HEK293 (cell line): ENCODE measurements at regions of chr16 and their contacts with region 1.

Region 1: GRCh38 chr16:82684251-82684650 is 57.5 kb downstream of the CDH13 start:
- H3K4me3 ChIP-seq: no peak overlapping the region
- H3K27ac ChIP-seq: no peak overlapping the region
- H3K4me1 ChIP-seq: no peaks in the 10 kb centered on the region
- CTCF ChIP-seq: no peak

Region 2: DNA sequence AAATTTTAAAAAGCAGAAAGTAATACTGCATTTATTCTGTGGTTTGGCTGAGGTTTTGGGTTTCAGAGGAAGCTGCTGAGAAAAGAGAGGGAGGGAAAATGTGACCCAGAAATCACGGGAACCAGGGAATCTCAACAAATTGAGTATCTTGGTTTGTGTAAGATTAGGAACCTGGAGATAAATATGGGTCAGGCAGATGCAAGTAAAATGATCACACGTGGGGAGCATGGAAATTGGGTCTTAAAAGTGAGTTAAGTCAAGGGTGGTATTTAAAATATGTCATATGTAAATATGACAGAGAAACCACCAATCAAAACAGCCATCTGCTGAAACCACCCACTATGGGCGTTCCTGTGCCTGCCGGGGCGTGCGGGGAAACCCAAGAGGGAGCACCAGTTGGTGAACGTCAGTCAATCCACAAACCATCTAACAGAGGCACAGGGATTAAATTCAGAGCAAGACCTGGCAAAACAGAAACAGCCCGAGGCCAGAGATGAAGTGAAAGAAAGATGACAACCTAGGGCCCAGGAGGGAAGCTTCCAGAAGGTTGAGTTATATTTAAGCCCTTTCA is 24.1 kb before region 1 on chr16:
- CTCF ChIA-PET with region 1: no interaction called
- POLR2A ChIA-PET with region 1: no interaction called
- H3K4me3 ChIP-seq: no peak overlapping the region
- H3K27ac ChIP-seq: no peak overlapping the region
- H3K4me1 ChIP-seq: peaks cover 7% of the 10 kb centered on the region
- CTCF ChIP-seq: no peak

Region 3: DNA sequence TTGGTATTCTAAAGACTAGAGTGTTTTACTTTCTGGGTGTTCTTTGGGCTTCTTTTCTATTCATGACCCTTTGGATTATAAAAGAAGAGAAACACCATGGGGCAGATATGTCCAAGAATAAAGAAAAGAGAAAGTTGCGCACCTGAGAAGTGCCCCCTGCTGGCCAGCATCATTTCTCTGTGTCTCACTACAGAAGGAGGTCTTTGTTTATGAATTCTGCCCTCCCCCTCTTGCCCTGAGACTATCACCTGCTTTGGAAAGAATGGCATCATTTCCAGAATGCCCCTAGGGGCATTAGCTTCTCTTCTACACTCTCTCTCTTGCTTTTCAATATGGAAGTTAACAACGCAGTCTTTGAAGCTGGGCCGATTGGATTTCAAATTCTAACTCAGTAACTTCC is 12.5 kb before region 1 on chr16:
- CTCF ChIA-PET with region 1: interaction called, 17 read pairs
- POLR2A ChIA-PET with region 1: no interaction called
- H3K4me3 ChIP-seq: no peak overlapping the region
- H3K27ac ChIP-seq: no peak overlapping the region
- H3K4me1 ChIP-seq: no peaks in the 10 kb centered on the region
- CTCF ChIP-seq: no peak